Activated B cell treated with CpG ODN at 0.5 μM for 24 hours (primary cell): ENCODE measurements at regions of chr4 and their contacts with region 1.

Region 1: GRCh38 chr4:110211007-110211769 is 12.8 kb upstream of the ELOVL6 start:
- DNase-seq: no peak
- ATAC-seq: peak; percentile 49
- H3K4me3 Mint-ChIP-seq: no peak overlapping the region
- H3K27ac Mint-ChIP-seq: no peak overlapping the region
- H3K4me1 Mint-ChIP-seq: peaks cover 1% of the 10 kb centered on the region
- H3K27me3 Mint-ChIP-seq: peaks cover under 1% of the 10 kb centered on the region
- CTCF ChIP-seq: no peak

Region 2: GRCh38 chr4:109877400-109877799 is 333.8 kb before region 1 on chr4:
- CTCF ChIA-PET with region 1: no interaction called
- POLR2A ChIA-PET with region 1: no interaction called
- intact Hi-C with region 1: no loop called
- DNase-seq: no peak
- ATAC-seq: no peak
- H3K4me3 Mint-ChIP-seq: no peak overlapping the region
- H3K27ac Mint-ChIP-seq: no peak overlapping the region
- H3K4me1 Mint-ChIP-seq: no peaks in the 10 kb centered on the region
- H3K27me3 Mint-ChIP-seq: peaks cover 5% of the 10 kb centered on the region
- CTCF ChIP-seq: no peak

Region 3: GRCh38 chr4:110049951-110050925 is 160.9 kb before region 1 on chr4:
- CTCF ChIA-PET with region 1: interaction called, 19 read pairs
- POLR2A ChIA-PET with region 1: no interaction called
- intact Hi-C with region 1: loop called (anchors 1 kb)
- DNase-seq: no peak
- ATAC-seq: no peak
- H3K4me3 Mint-ChIP-seq: no peak overlapping the region
- H3K27ac Mint-ChIP-seq: no peak overlapping the region
- H3K4me1 Mint-ChIP-seq: no peaks in the 10 kb centered on the region
- H3K27me3 Mint-ChIP-seq: no peaks in the 10 kb centered on the region
- CTCF ChIP-seq: peak; percentile 29

Region 4: GRCh38 chr4:110124711-110125110 is 86.5 kb before region 1 on chr4:
- CTCF ChIA-PET with region 1: no interaction called
- POLR2A ChIA-PET with region 1: no interaction called
- intact Hi-C with region 1: no loop called
- DNase-seq: no peak
- ATAC-seq: no peak
- H3K4me3 Mint-ChIP-seq: no peak overlapping the region
- H3K27ac Mint-ChIP-seq: no peak overlapping the region
- H3K4me1 Mint-ChIP-seq: no peaks in the 10 kb centered on the region
- H3K27me3 Mint-ChIP-seq: no peaks in the 10 kb centered on the region
- CTCF ChIP-seq: no peak

Region 5: GRCh38 chr4:110424144-110424543 is 213.0 kb after region 1 on chr4:
- CTCF ChIA-PET with region 1: no interaction called
- POLR2A ChIA-PET with region 1: no interaction called
- intact Hi-C with region 1: no loop called
- DNase-seq: no peak
- ATAC-seq: no peak
- H3K4me3 Mint-ChIP-seq: no peak overlapping the region
- H3K27ac Mint-ChIP-seq: no peak overlapping the region
- H3K4me1 Mint-ChIP-seq: no peaks in the 10 kb centered on the region
- H3K27me3 Mint-ChIP-seq: no peaks in the 10 kb centered on the region
- CTCF ChIP-seq: no peak

Region 6: GRCh38 chr4:110586131-110586850 is 375.1 kb after region 1 on chr4:
- CTCF ChIA-PET with region 1: no interaction called
- POLR2A ChIA-PET with region 1: no interaction called
- intact Hi-C with region 1: no loop called
- DNase-seq: no peak
- ATAC-seq: no peak
- H3K4me3 Mint-ChIP-seq: no peak overlapping the region
- H3K27ac Mint-ChIP-seq: no peak overlapping the region
- H3K4me1 Mint-ChIP-seq: no peaks in the 10 kb centered on the region
- H3K27me3 Mint-ChIP-seq: peaks cover 4% of the 10 kb centered on the region
- CTCF ChIP-seq: no peak